CD4-positive, alpha-beta T cell (primary cell): ENCODE measurements at regions of chr20 and their contacts with region 1.

Region 1: DNA sequence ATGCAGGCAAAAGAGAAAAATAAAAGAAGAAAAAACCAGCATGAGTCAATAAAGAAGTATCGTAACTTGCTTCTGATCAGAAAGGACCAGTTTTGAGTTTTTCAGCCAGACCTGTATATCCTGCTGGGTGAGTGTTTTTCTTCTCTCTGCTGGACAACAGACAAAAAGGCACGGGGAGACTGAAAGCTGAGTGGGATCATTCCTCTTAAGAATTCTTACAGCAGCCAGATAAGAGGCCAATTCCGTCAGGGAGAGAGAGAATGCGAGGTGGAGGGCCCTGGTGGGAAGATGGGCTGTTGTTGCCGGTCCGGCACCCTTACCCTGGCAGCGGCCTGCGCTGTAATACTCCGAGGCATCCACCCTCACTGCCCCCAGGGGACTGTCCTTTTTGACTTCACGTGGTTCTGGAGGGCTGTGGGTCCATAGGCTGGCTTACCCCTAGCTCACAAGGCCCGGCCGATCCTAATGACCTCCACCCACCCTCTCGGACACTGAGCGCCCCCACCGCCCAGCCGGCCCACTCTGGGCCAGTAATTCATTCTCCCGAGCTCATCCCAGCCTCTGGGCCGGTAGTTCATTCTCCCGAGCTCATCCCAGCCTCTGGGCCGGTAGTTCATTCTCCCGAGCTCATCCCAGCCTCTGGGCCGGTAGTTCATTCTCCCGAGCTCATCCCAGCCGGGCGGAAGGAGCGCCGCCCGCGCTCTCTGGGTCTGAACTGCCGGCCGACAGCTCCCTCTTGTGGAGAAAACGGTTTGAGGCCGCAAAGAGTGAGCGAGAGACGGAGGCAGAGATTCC is 118.3 kb upstream of the SIRPA start:
- DNase-seq: peak; percentile 70 to 90 (median 81)
- ATAC-seq: peak; percentile 93
- H3K4me3 ChIP-seq: peak overlapping the region; percentile 66
- H3K4me3 Mint-ChIP-seq: peak overlapping the region; percentile 81
- H3K27ac ChIP-seq: no peak overlapping the region
- H3K27ac Mint-ChIP-seq: no peak overlapping the region
- H3K4me1 ChIP-seq: peaks cover 9% of the 10 kb centered on the region
- H3K4me1 Mint-ChIP-seq: peaks cover 16% of the 10 kb centered on the region
- H3K27me3 ChIP-seq: peaks cover 0 to 11% of the 10 kb centered on the region in 2 experiments
- H3K27me3 Mint-ChIP-seq: peaks cover 17% of the 10 kb centered on the region
- CTCF ChIP-seq: peak; percentile 77

Region 2: GRCh38 chr20:1509237-1509636 is 267.6 kb before region 1 on chr20:
- CTCF ChIA-PET with region 1: interaction called, 25 read pairs
- POLR2A ChIA-PET with region 1: interaction called, 6 read pairs
- intact Hi-C with region 1: loop called in 1 of 2 experiments (anchors 1 kb)
- DNase-seq: peak in 10 of 14 experiments; percentile 3 to 58 (median 23)
- ATAC-seq: peak; percentile 84
- H3K4me3 ChIP-seq: no peak overlapping the region
- H3K4me3 Mint-ChIP-seq: no peak overlapping the region
- H3K27ac ChIP-seq: no peak overlapping the region
- H3K27ac Mint-ChIP-seq: no peak overlapping the region
- H3K4me1 ChIP-seq: no peaks in the 10 kb centered on the region
- H3K4me1 Mint-ChIP-seq: no peaks in the 10 kb centered on the region
- H3K27me3 ChIP-seq: peaks cover 0 to 3% of the 10 kb centered on the region in 2 experiments
- H3K27me3 Mint-ChIP-seq: no peaks in the 10 kb centered on the region
- CTCF ChIP-seq: peak; percentile 57

Region 3: GRCh38 chr20:1535420-1536175 is 241.3 kb before region 1 on chr20:
- CTCF ChIA-PET with region 1: interaction called, 4 read pairs
- POLR2A ChIA-PET with region 1: no interaction called
- intact Hi-C with region 1: loop called (anchors 1 to 2 kb)
- DNase-seq: peak in 2 of 14 experiments; percentile 42
- ATAC-seq: no peak
- H3K4me3 ChIP-seq: no peak overlapping the region
- H3K4me3 Mint-ChIP-seq: no peak overlapping the region
- H3K27ac ChIP-seq: no peak overlapping the region
- H3K27ac Mint-ChIP-seq: no peak overlapping the region
- H3K4me1 ChIP-seq: peaks cover 3% of the 10 kb centered on the region
- H3K4me1 Mint-ChIP-seq: peaks cover 6% of the 10 kb centered on the region
- H3K27me3 ChIP-seq: no peaks in the 10 kb centered on the region
- H3K27me3 Mint-ChIP-seq: no peaks in the 10 kb centered on the region
- CTCF ChIP-seq: no peak

Region 4: DNA sequence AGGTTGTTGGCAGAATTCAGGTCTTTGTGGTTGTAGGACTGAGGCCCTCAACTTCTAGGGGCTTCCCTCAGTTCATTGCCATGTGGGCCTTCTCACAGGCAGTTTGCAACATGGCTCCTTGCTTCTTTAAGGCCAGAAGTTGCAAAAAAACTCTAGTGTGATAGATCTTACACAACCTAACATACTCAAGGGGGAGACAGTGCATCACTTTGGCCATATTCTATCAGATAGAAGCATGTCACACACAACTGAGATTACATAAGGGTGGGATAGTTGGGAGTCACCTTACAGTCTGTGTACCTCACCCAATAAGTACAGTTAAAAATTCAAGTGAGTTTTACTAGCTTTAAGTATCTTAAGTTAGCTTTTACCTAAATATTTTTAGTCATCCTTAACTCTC is 220.9 kb before region 1 on chr20:
- CTCF ChIA-PET with region 1: interaction called, 14 read pairs
- POLR2A ChIA-PET with region 1: interaction called, 5 read pairs
- intact Hi-C with region 1: loop called in 1 of 2 experiments (anchors 2 kb)
- DNase-seq: peak in 4 of 14 experiments; percentile 12 to 62 (median 48)
- ATAC-seq: peak; percentile 58
- H3K4me3 ChIP-seq: no peak overlapping the region
- H3K4me3 Mint-ChIP-seq: no peak overlapping the region
- H3K27ac ChIP-seq: no peak overlapping the region
- H3K27ac Mint-ChIP-seq: no peak overlapping the region
- H3K4me1 ChIP-seq: no peaks in the 10 kb centered on the region
- H3K4me1 Mint-ChIP-seq: peaks cover 8% of the 10 kb centered on the region
- H3K27me3 ChIP-seq: no peaks in the 10 kb centered on the region
- H3K27me3 Mint-ChIP-seq: no peaks in the 10 kb centered on the region
- CTCF ChIP-seq: peak; percentile 48

Region 5: GRCh38 chr20:1764136-1765033 is 12.5 kb before region 1 on chr20:
- CTCF ChIA-PET with region 1: interaction called, 14 read pairs
- POLR2A ChIA-PET with region 1: no interaction called
- intact Hi-C with region 1: no loop called
- DNase-seq: peak; percentile 32 to 77 (median 46)
- ATAC-seq: peak; percentile 75
- H3K4me3 ChIP-seq: no peak overlapping the region
- H3K4me3 Mint-ChIP-seq: no peak overlapping the region
- H3K27ac ChIP-seq: no peak overlapping the region
- H3K27ac Mint-ChIP-seq: no peak overlapping the region
- H3K4me1 ChIP-seq: no peaks in the 10 kb centered on the region
- H3K4me1 Mint-ChIP-seq: no peaks in the 10 kb centered on the region
- H3K27me3 ChIP-seq: no peaks in the 10 kb centered on the region
- H3K27me3 Mint-ChIP-seq: no peaks in the 10 kb centered on the region
- CTCF ChIP-seq: peak; percentile 89

Region 6: GRCh38 chr20:1802385-1803060 is 25.6 kb after region 1 on chr20:
- CTCF ChIA-PET with region 1: no interaction called
- POLR2A ChIA-PET with region 1: no interaction called
- intact Hi-C with region 1: no loop called
- DNase-seq: peak in 7 of 14 experiments; percentile 8 to 64 (median 15)
- ATAC-seq: no peak
- H3K4me3 ChIP-seq: peak overlapping the region; percentile 20
- H3K4me3 Mint-ChIP-seq: peak overlapping the region; percentile 71
- H3K27ac ChIP-seq: no peak overlapping the region
- H3K27ac Mint-ChIP-seq: no peak overlapping the region
- H3K4me1 ChIP-seq: peaks cover 16% of the 10 kb centered on the region
- H3K4me1 Mint-ChIP-seq: peaks cover 16% of the 10 kb centered on the region
- H3K27me3 ChIP-seq: peaks cover 34 to 58% of the 10 kb centered on the region in 2 experiments
- H3K27me3 Mint-ChIP-seq: peaks cover 77% of the 10 kb centered on the region
- CTCF ChIP-seq: no peak